Motor neuron (in vitro differentiated cells): ENCODE measurements at regions of chr6 and their contacts with region 1.

Region 1: DNA sequence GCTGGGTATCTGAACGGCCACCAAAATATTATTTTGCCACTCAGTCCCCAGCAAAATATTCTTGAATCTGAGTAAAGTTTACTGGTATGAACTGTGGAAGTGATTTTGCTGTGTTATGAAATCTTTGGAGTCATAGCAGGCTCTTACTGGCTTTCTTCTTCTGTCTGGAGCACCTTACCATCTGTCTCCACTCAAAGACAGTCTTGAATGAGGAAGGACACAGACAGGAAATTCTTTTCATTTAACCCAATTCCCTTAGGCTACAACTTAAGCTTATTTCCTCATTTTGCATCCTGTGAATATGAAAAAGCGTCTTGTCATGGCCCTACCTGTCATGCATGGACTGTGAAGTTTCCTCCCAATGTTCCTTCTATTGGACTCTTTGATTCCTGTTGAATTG is 24.7 kb downstream of the FNDC1 start:
- ATAC-seq: peak in 3 of 8 experiments; percentile 18 to 47 (median 23)
- H3K4me3 ChIP-seq: no peak overlapping the region
- H3K27ac ChIP-seq: no peak overlapping the region
- H3K4me1 ChIP-seq: no peaks in the 10 kb centered on the region

Region 2: DNA sequence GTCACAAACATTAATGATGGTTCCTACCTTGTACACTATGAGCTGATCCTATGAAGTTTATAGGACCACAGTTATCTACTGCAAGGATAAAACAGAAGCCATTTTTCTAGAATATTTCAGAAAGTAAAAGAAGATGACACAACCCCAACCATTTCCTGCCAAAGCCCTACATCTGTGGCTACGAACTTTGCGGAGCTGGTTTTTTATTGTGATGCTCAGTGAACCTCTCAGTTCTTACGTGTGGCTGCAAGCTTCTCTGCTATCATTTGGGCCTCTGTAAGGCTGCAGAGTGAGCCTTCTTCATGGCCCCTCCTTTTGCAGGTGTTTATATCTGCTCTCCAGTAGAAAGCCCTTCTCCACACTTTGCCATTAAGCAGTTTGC is 131.4 kb before region 1 on chr6:
- in situ Hi-C with region 1: no loop called
- ATAC-seq: no peak
- H3K4me3 ChIP-seq: no peak overlapping the region
- H3K27ac ChIP-seq: no peak overlapping the region
- H3K4me1 ChIP-seq: no peaks in the 10 kb centered on the region

Region 3: DNA sequence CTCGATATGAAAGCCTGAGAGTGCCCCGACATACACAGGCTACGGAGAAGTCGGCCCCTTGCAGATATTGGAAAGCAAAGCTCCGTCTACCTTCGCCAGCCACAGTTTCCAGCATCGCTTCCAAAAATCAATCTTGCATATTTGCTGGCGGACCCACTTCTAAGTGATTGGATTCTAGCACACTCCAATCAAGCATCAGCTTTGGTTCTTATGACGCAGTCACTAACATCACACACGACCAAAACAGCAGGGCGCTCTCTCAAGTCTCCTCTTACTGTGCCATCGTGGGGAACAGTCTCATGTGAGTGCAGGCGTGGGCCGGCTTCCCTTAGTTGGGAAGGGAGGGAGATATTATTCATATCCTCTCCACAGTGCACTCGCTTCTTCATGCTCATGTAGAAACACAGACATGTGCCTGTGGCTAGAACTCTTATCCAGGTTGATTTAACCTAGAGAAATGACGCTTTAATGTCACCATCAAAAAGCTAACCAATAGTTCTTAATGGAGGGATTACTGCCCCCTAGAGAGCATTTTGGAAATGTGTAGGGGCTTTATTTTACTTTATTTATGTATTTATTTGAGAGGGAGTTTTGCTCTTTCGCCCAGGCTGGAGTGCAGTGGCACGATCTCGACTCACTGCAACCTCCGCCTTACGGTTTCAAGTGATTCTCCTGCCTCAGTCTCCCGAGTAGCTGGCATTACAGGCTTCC is 269.4 kb after region 1 on chr6:
- in situ Hi-C with region 1: loop called in 1 of 9 experiments (anchors 25 kb)
- ATAC-seq: peak in 1 of 8 experiments; percentile 34
- H3K4me3 ChIP-seq: no peak overlapping the region
- H3K27ac ChIP-seq: no peak overlapping the region
- H3K4me1 ChIP-seq: no peaks in the 10 kb centered on the region

Region 4: GRCh38 chr6:159633196-159633595 is 439.3 kb after region 1 on chr6:
- in situ Hi-C with region 1: loop called in 1 of 9 experiments (anchors 25 kb)
- ATAC-seq: no peak
- H3K4me3 ChIP-seq: no peak overlapping the region
- H3K27ac ChIP-seq: no peak overlapping the region
- H3K4me1 ChIP-seq: no peaks in the 10 kb centered on the region

Region 5: DNA sequence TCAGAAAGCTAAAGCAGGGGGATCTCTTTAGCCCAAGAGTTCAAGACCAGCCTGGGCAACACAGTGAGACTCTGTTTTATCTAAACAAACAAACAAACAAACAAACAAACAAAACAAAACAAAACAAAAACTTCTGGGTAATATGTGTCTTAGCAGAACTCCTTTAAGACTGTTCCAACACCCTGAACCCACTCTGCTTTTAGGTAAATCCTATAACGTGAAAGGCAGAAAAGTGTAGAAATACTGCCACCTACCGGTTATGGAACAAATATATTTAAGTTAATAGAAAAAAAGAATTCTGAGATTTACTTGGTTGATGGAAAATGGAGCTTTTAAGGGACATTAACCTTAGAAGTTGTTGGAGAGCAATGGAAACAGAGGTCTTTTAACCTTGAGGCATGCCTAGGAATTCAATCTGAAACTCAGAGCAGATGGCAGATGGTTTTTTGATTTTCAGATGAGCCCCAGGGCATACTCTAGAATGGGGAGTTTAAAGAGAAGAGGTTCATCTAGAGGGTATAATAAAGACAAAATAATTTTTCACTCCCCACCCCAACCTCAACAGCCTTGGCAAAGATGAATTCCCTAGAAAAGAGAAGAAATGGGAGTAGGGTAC is 460.7 kb after region 1 on chr6:
- in situ Hi-C with region 1: loop called in 3 of 9 experiments (anchors 25 kb)
- ATAC-seq: peak in 3 of 8 experiments; percentile 48 to 66 (median 58)
- H3K4me3 ChIP-seq: no peak overlapping the region
- H3K27ac ChIP-seq: no peak overlapping the region
- H3K4me1 ChIP-seq: no peaks in the 10 kb centered on the region